Posterior vena cava (tissue), 2 donors: ENCODE measurements at regions of chr9 and their contacts with region 1.

Region 1: GRCh38 chr9:69115621-69116020 is 58.5 kb upstream of the TJP2 start:
- DNase-seq: no peak

Region 2: DNA sequence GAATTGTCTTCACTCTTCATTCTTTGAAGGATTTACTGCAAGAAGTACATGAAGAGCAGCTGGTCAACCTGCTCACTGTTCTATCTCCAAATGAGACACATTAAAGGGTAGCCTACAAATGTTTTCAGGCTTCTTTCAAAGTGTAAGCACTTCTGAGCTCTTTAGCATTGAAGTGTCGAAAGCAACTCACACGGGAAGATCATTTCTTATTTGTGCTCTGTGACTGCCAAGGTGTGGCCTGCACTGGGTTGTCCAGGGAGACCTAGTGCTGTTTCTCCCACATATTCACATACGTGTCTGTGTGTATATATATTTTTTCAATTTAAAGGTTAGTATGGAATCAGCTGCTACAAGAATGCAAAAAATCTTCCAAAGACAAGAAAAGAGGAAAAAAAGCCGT is 42.5 kb before region 1 on chr9:
- intact Hi-C with region 1: loop called in 1 of 2 experiments (anchors 1 kb)
- DNase-seq: no peak